MCF 10A (cell line): ENCODE measurements at regions of chr10 and their contacts with region 1.

Region 1: GRCh38 chr10:71727738-71728737 is 8.5 kb upstream of the C10orf105 start:
- DNase-seq: peak; percentile 70
- H3K4me3 Mint-ChIP-seq: no peak overlapping the region
- H3K27ac Mint-ChIP-seq: peak overlapping the region; percentile 42
- H3K4me1 Mint-ChIP-seq: peaks cover 18% of the 10 kb centered on the region
- H3K27me3 Mint-ChIP-seq: no peaks in the 10 kb centered on the region
- CTCF ChIP-seq: no peak

Region 2: GRCh38 chr10:71302874-71303568 is 425.0 kb before region 1 on chr10:
- CTCF ChIA-PET with region 1: no interaction called
- POLR2A ChIA-PET with region 1: no interaction called
- intact Hi-C with region 1: no loop called
- DNase-seq: peak; percentile 67
- H3K4me3 Mint-ChIP-seq: no peak overlapping the region
- H3K27ac Mint-ChIP-seq: no peak overlapping the region
- H3K4me1 Mint-ChIP-seq: no peaks in the 10 kb centered on the region
- H3K27me3 Mint-ChIP-seq: no peaks in the 10 kb centered on the region
- CTCF ChIP-seq: peak; percentile 30

Region 3: GRCh38 chr10:71766702-71767419 is 38.8 kb after region 1 on chr10:
- CTCF ChIA-PET with region 1: interaction called, 3 read pairs
- POLR2A ChIA-PET with region 1: interaction called, 4 read pairs
- intact Hi-C with region 1: loop called (anchors 5 kb)
- DNase-seq: peak; percentile 88
- H3K4me3 Mint-ChIP-seq: peak overlapping the region; percentile 59
- H3K27ac Mint-ChIP-seq: peak overlapping the region; percentile 95
- H3K4me1 Mint-ChIP-seq: peaks cover 33% of the 10 kb centered on the region
- H3K27me3 Mint-ChIP-seq: no peaks in the 10 kb centered on the region
- CTCF ChIP-seq: no peak

Region 4: DNA sequence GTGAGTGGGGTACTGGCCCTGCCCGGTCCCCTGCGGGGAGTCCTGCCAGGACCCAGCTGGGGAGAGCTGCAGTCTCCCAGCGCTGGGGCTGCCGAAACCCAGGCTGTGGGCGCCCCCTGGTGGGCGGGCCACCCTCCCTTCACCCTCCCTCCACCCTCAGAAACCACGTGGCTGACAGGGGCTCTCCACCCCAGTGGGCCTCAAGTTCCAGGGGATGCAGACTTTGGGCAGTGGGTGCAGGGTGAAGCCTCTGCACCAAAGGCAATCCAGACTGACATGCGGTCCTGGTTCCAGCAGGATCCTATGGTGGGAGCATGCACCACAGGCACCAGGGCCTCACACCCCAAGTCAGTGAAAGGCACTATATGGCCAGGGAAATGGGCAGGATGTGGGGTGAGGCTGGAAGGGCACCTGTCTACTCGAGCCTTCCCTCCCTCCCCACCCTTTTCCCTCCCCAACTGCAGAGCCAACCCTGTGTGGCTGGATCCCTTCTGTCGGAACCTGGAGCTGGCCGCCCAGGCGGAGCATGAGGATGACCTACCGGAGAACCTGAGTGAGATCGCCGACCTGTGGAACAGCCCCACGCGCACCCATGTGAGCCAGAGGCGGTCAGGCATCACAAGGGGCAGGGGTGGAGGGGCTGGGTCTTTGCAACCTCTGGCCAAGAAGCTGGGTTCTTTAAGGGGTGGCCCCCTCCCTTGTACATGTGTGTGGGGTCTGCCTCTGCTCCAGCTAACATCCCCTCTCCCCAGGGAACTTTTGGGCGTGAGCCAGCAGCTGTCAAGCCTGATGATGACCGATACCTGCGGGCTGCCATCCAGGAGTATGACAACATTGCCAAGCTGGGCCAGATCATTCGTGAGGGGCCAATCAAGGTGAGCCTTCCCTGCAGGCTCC is 84.2 kb after region 1 on chr10:
- CTCF ChIA-PET with region 1: no interaction called
- POLR2A ChIA-PET with region 1: interaction called, 3 read pairs
- intact Hi-C with region 1: loop called (anchors 5 kb)
- DNase-seq: peak; percentile 62
- H3K4me3 Mint-ChIP-seq: no peak overlapping the region
- H3K27ac Mint-ChIP-seq: no peak overlapping the region
- H3K4me1 Mint-ChIP-seq: no peaks in the 10 kb centered on the region
- H3K27me3 Mint-ChIP-seq: no peaks in the 10 kb centered on the region
- CTCF ChIP-seq: peak; percentile 91